ENCODE measurements at regions of chr4 and their contacts with region 1.

Region 1: GRCh38 chr4:84956014-84956413 is 10.5 kb downstream of the WDFY3 start:
- DNase-seq: no peak

Region 2: GRCh38 chr4:84920617-84921016 is 35.4 kb before region 1 on chr4:
- intact Hi-C with region 1: loop called (anchors 5 kb)
- DNase-seq: no peak

Measured in posterior cingulate gyrus (tissue), 11 donors.